ENCODE measurements at regions of chr18 and their contacts with region 1.

Region 1: DNA sequence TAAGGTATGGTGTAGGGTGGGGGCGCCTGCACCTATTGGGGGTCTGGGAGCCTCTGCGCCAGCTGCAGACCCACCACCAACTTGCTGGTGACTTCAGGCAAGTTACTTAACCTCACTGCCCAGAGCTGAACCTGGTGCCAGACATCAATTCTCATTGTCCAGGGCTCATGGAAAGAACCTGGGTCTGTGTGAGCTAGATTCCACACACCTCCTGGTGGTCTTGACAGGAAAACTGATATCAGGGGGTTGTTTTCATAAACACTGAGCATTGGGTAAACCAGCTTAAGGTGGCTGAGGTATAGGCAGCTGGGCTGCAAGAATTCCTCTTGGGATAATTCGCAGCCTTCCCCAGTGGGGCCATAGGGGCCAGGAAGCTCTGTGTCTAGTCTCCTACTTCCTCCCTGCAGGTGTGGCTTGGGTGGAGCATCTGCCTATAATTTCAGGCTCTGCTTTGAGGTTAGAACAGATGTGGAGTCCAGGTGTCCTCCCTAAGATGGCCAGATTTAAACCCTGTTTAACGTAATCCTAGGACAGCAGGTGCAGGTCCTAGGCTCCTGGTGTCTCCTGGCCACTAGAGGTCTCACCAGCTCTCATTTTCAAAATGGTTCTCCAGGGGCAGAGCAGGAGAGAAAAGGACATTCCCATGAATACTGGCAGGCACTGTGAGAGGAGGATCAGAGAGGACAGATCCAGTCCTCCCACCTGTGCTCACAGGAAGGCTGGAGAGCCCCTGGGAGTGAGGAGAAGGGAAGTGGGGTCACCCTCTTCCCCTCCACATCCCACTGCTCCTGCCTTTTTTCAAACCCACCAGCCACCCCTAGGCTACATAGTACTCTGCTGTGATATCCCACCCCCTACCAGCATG is 100.4 kb upstream of the SMAD2 start:
- DNase-seq: peak in 1 of 2 donors; percentile 62
- H3K4me3 ChIP-seq: no peak overlapping the region
- H3K27ac ChIP-seq: peak overlapping the region; percentile 57 to 63
- H3K4me1 ChIP-seq: peaks cover 0 to 18% of the 10 kb centered on the region in 2 donors
- H3K27me3 ChIP-seq: no peaks in the 10 kb centered on the region
- CTCF ChIP-seq: peak; percentile 33 to 84 (median 74)
- POLR2A ChIP-seq: no peak

Region 2: GRCh38 chr18:48330403-48331022 is 299.7 kb after region 1 on chr18:
- intact Hi-C with region 1: loop called (anchors 10 kb)
- DNase-seq: no peak
- H3K4me3 ChIP-seq: no peak overlapping the region
- H3K27ac ChIP-seq: peak overlapping the region; percentile 40 to 69
- H3K4me1 ChIP-seq: peaks cover 0 to 4% of the 10 kb centered on the region in 2 donors
- H3K27me3 ChIP-seq: no peaks in the 10 kb centered on the region
- CTCF ChIP-seq: no peak
- POLR2A ChIP-seq: no peak

Region 3: GRCh38 chr18:48445540-48445939 is 414.7 kb after region 1 on chr18:
- intact Hi-C with region 1: loop called (anchors 5 kb)
- DNase-seq: peak; percentile 67 to 73
- H3K4me3 ChIP-seq: no peak overlapping the region
- H3K27ac ChIP-seq: no peak overlapping the region
- H3K4me1 ChIP-seq: peaks cover 8 to 11% of the 10 kb centered on the region in 2 donors
- H3K27me3 ChIP-seq: no peaks in the 10 kb centered on the region
- CTCF ChIP-seq: peak; percentile 61 to 86 (median 75)
- POLR2A ChIP-seq: no peak